ENCODE measurements at regions of chr2 and their contacts with region 1.

Region 1: GRCh38 chr2:96218508-96219131 is 10.0 kb upstream of the STARD7 start:
- DNase-seq: no peak
- H3K4me3 Mint-ChIP-seq: no peak overlapping the region
- H3K27ac Mint-ChIP-seq: no peak overlapping the region
- H3K4me1 Mint-ChIP-seq: no peaks in the 10 kb centered on the region
- H3K27me3 Mint-ChIP-seq: no peaks in the 10 kb centered on the region
- CTCF ChIP-seq: no peak

Region 2: GRCh38 chr2:96195410-96196066 is 23.1 kb before region 1 on chr2:
- CTCF ChIA-PET with region 1: no interaction called
- POLR2A ChIA-PET with region 1: no interaction called
- intact Hi-C with region 1: no loop called
- DNase-seq: no peak
- H3K4me3 Mint-ChIP-seq: no peak overlapping the region
- H3K27ac Mint-ChIP-seq: no peak overlapping the region
- H3K4me1 Mint-ChIP-seq: peaks cover 2% of the 10 kb centered on the region
- H3K27me3 Mint-ChIP-seq: no peaks in the 10 kb centered on the region
- CTCF ChIP-seq: no peak

Region 3: GRCh38 chr2:96241900-96242611 is 23.4 kb after region 1 on chr2:
- CTCF ChIA-PET with region 1: interaction called, 3 read pairs
- POLR2A ChIA-PET with region 1: no interaction called
- intact Hi-C with region 1: loop called (anchors 2 kb)
- DNase-seq: peak; percentile 83
- H3K4me3 Mint-ChIP-seq: no peak overlapping the region
- H3K27ac Mint-ChIP-seq: peak overlapping the region; percentile 35
- H3K4me1 Mint-ChIP-seq: peaks cover 9% of the 10 kb centered on the region
- H3K27me3 Mint-ChIP-seq: no peaks in the 10 kb centered on the region
- CTCF ChIP-seq: no peak